Activated CD4-positive, alpha-beta T cell treated with anti-CD3 and anti-CD28 coated beads for 36 hours (primary cell): ENCODE measurements at regions of chr3 and their contacts with region 1.

Region 1: GRCh38 chr3:31629054-31629453 is 96.3 kb downstream of the STT3B start:
- DNase-seq: no peak
- ATAC-seq: no peak
- H3K4me3 Mint-ChIP-seq: no peak overlapping the region
- H3K27ac Mint-ChIP-seq: no peak overlapping the region
- H3K4me1 Mint-ChIP-seq: peaks cover 18% of the 10 kb centered on the region
- H3K27me3 Mint-ChIP-seq: no peaks in the 10 kb centered on the region

Region 2: DNA sequence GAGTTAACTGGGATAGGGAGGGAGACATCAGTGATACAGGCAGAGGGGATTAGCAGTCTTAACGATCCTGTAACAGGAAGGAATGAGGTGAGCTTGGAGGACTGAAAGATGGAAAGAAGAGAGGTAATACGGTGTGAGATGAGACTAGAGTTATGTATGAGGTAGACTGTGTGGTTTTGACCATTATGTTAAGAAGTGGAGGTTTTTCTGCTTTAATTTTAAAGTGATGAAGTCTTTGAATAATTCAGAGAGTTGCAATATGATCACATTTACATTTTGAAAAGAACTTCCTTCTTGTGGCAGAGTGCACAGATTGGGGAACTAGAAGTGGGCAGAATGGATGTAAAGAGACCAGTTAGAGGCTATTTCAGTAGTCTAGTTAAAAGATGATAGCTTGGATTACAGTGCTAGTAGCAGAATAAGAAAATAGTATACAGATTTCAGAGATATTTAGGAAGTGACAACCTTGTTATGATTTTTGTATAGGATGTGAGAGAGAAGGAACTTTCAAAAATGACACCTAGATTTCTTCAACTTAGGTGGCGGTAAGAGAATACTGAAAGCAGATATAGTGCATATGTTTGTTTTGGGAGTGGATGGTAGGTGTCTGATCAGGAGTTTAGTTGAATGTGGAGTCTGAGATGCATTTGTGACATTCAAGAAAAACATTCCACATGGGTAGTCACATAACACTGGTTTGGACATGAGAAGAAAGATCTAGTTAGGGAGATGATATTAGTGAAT is 55.8 kb before region 1 on chr3:
- CTCF ChIA-PET with region 1: no interaction called
- POLR2A ChIA-PET with region 1: no interaction called
- intact Hi-C with region 1: loop called in 1 of 2 experiments (anchors 5 kb)
- DNase-seq: no peak
- ATAC-seq: peak; percentile 23
- H3K4me3 Mint-ChIP-seq: no peak overlapping the region
- H3K27ac Mint-ChIP-seq: no peak overlapping the region
- H3K4me1 Mint-ChIP-seq: peaks cover 51% of the 10 kb centered on the region
- H3K27me3 Mint-ChIP-seq: no peaks in the 10 kb centered on the region